HEK293T (cell line): ENCODE measurements at regions of chr6 and their contacts with region 1.

Region 1: DNA sequence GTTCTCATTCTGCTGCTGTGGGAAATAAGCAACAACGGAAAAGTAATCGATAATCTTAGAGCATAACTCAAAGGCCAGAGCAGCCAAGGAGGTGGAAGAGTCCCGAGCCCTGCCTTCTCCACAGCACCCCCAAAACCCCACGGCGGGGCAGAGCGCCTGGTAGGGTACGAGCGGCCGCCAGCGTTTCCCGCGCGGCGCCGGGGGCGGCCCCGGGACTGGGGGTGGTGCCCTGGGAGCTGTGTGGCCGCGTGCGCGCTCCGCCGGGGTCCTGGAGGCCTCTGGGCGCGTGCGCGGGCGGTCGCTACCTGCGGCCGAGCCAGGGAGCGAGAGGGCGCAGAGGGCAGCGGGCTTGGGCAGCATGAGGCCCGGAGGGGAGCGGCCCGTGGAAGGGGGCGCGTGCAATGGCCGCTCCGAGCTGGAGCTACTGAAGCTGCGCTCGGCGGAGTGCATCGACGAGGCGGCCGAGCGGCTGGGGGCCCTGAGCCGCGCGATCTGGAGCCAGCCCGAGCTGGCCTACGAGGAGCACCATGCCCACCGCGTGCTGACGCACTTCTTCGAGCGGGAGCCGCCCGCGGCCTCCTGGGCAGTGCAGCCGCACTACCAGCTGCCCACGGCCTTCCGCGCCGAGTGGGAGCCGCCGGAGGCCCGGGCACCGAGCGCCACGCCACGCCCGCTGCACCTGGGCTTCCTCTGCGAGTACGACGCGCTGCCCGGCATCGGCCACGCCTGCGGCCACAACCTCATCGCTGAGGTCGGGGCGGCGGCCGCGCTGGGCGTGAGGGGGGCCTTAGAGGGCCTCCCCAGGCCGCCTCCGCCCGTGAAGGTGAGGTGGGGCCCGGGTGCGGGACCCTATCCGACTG is at the start of gene PM20D2:
- DNase-seq: peak; percentile 72

Region 2: GRCh38 chr6:88339761-88340160 is 806.3 kb before region 1 on chr6:
- CTCF ChIA-PET with region 1: no interaction called
- POLR2A ChIA-PET with region 1: no interaction called
- DNase-seq: no peak

Region 3: DNA sequence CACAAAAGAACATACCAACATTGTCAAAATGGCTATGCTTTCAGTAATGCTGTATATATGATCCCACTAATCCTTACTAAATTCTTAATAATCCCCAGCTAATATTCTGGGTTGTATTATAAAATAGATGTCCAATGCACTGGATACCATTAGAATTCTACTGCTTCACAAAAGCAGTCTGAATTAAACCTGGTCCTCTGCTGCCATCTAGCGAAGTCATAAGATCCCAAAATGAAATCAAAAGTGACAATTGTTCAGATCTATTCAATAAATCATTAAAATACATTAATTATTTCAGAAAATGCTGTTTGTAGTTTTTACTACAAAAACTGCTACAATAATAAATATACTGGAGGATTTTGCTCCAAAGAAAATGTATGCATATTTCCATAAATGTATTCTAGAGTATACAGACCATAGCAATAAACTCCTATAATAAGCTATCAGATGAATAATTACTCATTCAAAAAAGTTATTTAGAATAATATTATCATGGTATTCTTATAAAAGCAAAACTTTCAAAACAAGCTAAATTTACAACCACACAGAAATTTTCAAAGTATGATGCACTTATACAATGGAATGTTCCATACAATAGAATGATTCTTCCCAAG is 275.2 kb before region 1 on chr6:
- CTCF ChIA-PET with region 1: no interaction called
- POLR2A ChIA-PET with region 1: no interaction called
- DNase-seq: peak; percentile 18

Region 4: GRCh38 chr6:88945415-88946008 is 200.5 kb before region 1 on chr6:
- CTCF ChIA-PET with region 1: no interaction called
- POLR2A ChIA-PET with region 1: no interaction called
- DNase-seq: no peak

Region 5: GRCh38 chr6:89132057-89132456 is 14.0 kb before region 1 on chr6:
- CTCF ChIA-PET with region 1: interaction called, 3 read pairs
- POLR2A ChIA-PET with region 1: interaction called, 19 read pairs
- DNase-seq: no peak

Region 6: GRCh38 chr6:89208551-89208950 is 62.5 kb after region 1 on chr6:
- CTCF ChIA-PET with region 1: no interaction called
- POLR2A ChIA-PET with region 1: no interaction called
- DNase-seq: no peak